ENCODE measurements at regions of chr3 and their contacts with region 1.

Region 1: GRCh38 chr3:12868039-12869034 is 27.0 kb upstream of the RPL32 start:
- DNase-seq: peak; percentile 81
- H3K4me3 Mint-ChIP-seq: peak overlapping the region; percentile 59
- H3K27ac Mint-ChIP-seq: no peak overlapping the region
- H3K4me1 Mint-ChIP-seq: peaks cover 20% of the 10 kb centered on the region
- H3K27me3 Mint-ChIP-seq: peaks cover 60% of the 10 kb centered on the region
- CTCF ChIP-seq: peak; percentile 70

Region 2: DNA sequence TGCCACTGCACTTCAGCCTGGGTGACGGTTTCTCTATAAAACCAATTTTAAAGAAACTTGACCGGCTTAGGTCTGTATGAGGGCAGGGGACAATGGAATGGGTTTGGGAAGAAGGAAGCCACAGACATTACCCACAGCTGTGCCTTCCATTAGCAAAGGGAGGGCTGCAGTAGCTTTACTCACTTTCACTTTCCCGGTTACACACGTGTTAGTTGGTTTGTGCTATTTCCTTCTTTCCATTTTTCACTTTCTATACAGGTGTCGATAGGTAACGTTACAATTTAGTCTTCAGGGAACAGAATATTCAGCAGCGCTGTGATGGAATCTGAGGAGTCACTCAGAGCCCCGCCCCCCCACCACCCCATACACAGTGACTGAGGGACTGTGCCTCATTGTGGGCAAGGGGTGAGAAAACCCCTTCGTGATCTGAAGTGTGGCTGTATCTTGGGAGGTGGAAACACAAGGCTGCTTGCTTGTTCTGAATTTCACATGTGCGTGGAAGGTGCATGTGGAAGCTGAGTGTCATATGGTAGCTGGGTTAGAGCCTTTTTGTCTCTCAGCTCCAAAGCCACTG is 17.9 kb after region 1 on chr3:
- CTCF ChIA-PET with region 1: interaction called, 8 read pairs
- intact Hi-C with region 1: loop called (anchors 2 kb)
- DNase-seq: no peak
- H3K4me3 Mint-ChIP-seq: no peak overlapping the region
- H3K27ac Mint-ChIP-seq: no peak overlapping the region
- H3K4me1 Mint-ChIP-seq: no peaks in the 10 kb centered on the region
- H3K27me3 Mint-ChIP-seq: peaks cover 71% of the 10 kb centered on the region
- CTCF ChIP-seq: no peak

Region 3: DNA sequence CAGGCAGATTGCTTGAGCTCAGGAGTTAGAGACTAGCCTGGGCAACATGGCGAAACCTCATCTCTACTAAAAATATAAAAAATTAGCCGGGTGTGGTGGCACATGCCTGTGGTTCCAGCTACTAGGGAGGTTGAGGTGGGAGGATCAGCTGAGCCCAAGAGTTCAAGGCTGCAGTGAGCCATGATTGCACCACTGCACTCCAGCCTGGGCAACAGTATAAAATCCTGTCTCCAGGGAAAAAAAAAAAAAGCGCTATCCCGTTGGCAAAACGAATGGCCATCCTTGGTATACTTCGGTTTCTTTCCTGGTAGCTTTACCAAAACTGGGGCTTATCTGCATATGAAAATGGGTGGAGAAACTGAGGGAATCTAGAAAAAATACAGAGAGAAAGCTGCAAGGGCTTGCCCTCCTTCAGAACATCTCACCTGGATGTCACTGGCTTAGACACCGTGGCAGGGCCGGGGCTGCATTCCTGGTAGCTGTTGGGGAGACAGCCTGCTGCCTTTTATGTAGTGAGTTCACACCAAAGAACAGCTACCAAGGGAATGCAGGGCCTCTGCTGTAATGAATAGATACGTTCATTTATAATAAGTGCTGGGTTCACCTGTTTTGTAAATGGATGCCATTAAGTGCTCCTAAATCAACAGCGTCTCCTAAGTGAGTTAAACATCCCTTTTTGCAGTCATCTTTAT is 108.9 kb after region 1 on chr3:
- CTCF ChIA-PET with region 1: no interaction called
- intact Hi-C with region 1: no loop called
- DNase-seq: no peak
- H3K4me3 Mint-ChIP-seq: no peak overlapping the region
- H3K27ac Mint-ChIP-seq: no peak overlapping the region
- H3K4me1 Mint-ChIP-seq: no peaks in the 10 kb centered on the region
- H3K27me3 Mint-ChIP-seq: peaks cover 13% of the 10 kb centered on the region
- CTCF ChIP-seq: no peak

Measured in Calu3 (cell line).